ENCODE measurements at regions of chrX and their contacts with region 1.

Region 1: GRCh38 chrX:153507484-153508178 is 9.8 kb upstream of the ATP2B3 start:
- DNase-seq: peak; percentile 93
- ATAC-seq: peak; percentile 90

Region 2: DNA sequence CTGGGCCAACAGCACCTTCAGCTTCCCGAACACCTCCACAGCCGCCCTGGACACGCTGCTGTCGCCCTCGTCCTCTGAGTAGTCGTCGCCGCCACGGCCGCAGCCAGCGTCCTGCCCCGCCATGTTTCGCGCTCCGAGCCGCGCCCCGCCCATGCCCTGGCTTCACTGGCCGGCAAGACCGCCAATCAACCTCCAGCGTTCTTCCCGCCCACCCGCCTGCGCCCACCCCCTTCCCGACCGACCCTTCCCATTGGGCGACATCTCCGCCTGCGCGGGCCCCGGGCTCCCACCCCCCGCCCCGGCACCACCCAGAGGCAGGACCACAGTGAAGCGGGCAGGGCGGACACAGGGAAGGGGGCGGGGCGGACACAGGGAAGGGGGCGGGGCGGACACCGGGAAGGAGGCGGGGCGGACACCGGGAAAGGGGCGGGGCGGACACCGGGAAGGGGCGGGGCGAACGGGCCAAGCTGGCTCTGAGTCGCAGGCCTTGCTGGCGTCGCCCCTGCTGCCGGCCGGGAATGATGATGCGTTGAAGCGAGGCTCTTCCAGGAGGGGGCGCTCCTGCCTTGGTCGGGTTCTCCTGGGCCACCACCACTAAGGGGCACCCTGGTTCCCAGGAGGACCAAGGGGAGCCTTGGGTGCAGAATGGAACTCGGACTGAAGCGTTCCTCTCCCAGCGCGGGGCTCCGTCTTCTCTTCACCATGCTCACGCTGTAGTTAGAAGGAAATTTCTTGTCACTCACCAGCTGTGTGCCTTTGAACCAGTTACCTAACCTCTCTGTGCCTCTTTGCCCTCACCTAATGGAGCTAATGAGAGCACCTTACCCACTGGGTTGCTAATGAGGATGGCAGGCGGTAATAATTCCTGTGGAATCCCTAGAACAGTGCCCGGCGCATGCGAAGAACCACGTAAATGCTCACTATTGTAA is 36.9 kb before region 1 on chrX and contains the start of gene HAUS7:
- intact Hi-C with region 1: loop called (anchors 5 kb)
- DNase-seq: peak; percentile 94
- ATAC-seq: peak; percentile 91
- total RNA-seq, gene HAUS7: 31.4 TPM